ENCODE measurements at regions of chr15 and their contacts with region 1.

Region 1: GRCh38 chr15:55108858-55109518 is 87.8 kb downstream of the RSL24D1 start:
- DNase-seq: peak; percentile 58 to 97 (median 78)

Region 2: GRCh38 chr15:53962332-53963241 is 1146.4 kb before region 1 on chr15:
- intact Hi-C with region 1: loop called (anchors 2 kb)
- DNase-seq: peak in 6 of 10 donors; percentile 19 to 78 (median 41)